ENCODE measurements at regions of chr5 and their contacts with region 1.

Region 1: GRCh38 chr5:102681407-102681983 is 73.6 kb upstream of the PAM start:
- DNase-seq: peak; percentile 3
- ATAC-seq: peak; percentile 97
- H3K4me3 ChIP-seq: no peak overlapping the region
- H3K27ac ChIP-seq: no peak overlapping the region
- H3K4me1 ChIP-seq: no peaks in the 10 kb centered on the region
- H3K27me3 ChIP-seq: no peaks in the 10 kb centered on the region
- CTCF ChIP-seq: peak; percentile 83 to 94 (median 86); a peak in 5 of 6 replicates
- EP300 ChIP-seq: no peak
- POLR2A ChIP-seq: no peak
- RAD21 ChIP-seq: peak; percentile 92

Region 2: GRCh38 chr5:102583276-102584124 is 98.0 kb before region 1 on chr5:
- CTCF ChIA-PET with region 1: interaction called, 9 read pairs
- POLR2A ChIA-PET with region 1: no interaction called
- RAD21 ChIA-PET with region 1: interaction called, 6 read pairs
- SMC1A ChIA-PET with region 1: interaction called, 16 read pairs
- in situ Hi-C with region 1: no loop called
- intact Hi-C with region 1: no loop called
- DNase-seq: no peak
- ATAC-seq: peak; percentile 34; the same call in 1 of the 3 replicates
- H3K4me3 ChIP-seq: no peak overlapping the region
- H3K27ac ChIP-seq: no peak overlapping the region
- H3K4me1 ChIP-seq: no peaks in the 10 kb centered on the region
- H3K27me3 ChIP-seq: no peaks in the 10 kb centered on the region
- CTCF ChIP-seq: peak in 2 of 3 experiments; percentile 23 to 32; a peak in 3 of 6 replicates
- EP300 ChIP-seq: no peak
- POLR2A ChIP-seq: no peak
- RAD21 ChIP-seq: 0 out of 2 replicates have a peak, but pooled peaks have one; percentile 6

Region 3: GRCh38 chr5:102778478-102778877 is 97.0 kb after region 1 on chr5:
- CTCF ChIA-PET with region 1: interaction called, 10 read pairs
- POLR2A ChIA-PET with region 1: interaction called, 3 read pairs
- RAD21 ChIA-PET with region 1: interaction called, 7 read pairs
- SMC1A ChIA-PET with region 1: interaction called, 14 read pairs
- in situ Hi-C with region 1: no loop called
- intact Hi-C with region 1: no loop called
- DNase-seq: no peak
- ATAC-seq: peak; percentile 67
- H3K4me3 ChIP-seq: no peak overlapping the region
- H3K27ac ChIP-seq: no peak overlapping the region
- H3K4me1 ChIP-seq: 0 out of 2 replicates have a peak, but pooled peaks cover 5% of the 10 kb centered on the region
- H3K27me3 ChIP-seq: no peaks in the 10 kb centered on the region
- CTCF ChIP-seq: no peak
- EP300 ChIP-seq: no peak
- POLR2A ChIP-seq: no peak
- RAD21 ChIP-seq: no peak

Region 4: DNA sequence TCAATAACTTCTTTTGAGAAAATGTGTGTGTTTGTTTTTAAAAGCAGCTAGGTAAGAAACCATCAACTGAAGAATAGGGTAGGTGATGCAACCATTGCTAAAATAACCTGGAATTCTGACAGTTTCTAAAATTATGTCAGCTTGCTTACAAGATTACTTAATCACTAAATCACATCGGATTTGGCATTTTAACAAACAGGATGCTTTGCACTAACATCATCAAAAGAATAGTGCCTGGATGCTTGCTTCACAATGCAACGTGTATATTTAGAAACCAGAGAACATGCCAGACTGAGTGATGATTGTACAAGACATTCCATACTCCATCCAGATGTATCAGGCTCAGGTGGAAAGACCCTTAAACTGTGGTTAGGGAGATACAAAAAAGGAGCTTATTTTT is 117.5 kb after region 1 on chr5:
- CTCF ChIA-PET with region 1: interaction called, 10 read pairs
- POLR2A ChIA-PET with region 1: no interaction called
- RAD21 ChIA-PET with region 1: interaction called, 3 read pairs
- SMC1A ChIA-PET with region 1: no interaction called
- in situ Hi-C with region 1: no loop called
- intact Hi-C with region 1: loop called (anchors 5 kb)
- DNase-seq: no peak
- ATAC-seq: no peak
- H3K4me3 ChIP-seq: no peak overlapping the region
- H3K27ac ChIP-seq: no peak overlapping the region
- H3K4me1 ChIP-seq: no peaks in the 10 kb centered on the region
- H3K27me3 ChIP-seq: no peaks in the 10 kb centered on the region
- CTCF ChIP-seq: no peak
- EP300 ChIP-seq: no peak
- POLR2A ChIP-seq: no peak
- RAD21 ChIP-seq: no peak

Region 5: GRCh38 chr5:103031607-103032006 is 350.1 kb after region 1 on chr5:
- CTCF ChIA-PET with region 1: interaction called, 8 read pairs
- POLR2A ChIA-PET with region 1: no interaction called
- RAD21 ChIA-PET with region 1: interaction called, 3 read pairs
- SMC1A ChIA-PET with region 1: interaction called, 8 read pairs
- in situ Hi-C with region 1: loop called (anchors 10 kb)
- intact Hi-C with region 1: no loop called
- DNase-seq: no peak
- ATAC-seq: peak; percentile 40
- H3K4me3 ChIP-seq: no peak overlapping the region
- H3K27ac ChIP-seq: no peak overlapping the region
- H3K4me1 ChIP-seq: no peaks in the 10 kb centered on the region
- H3K27me3 ChIP-seq: no peaks in the 10 kb centered on the region
- CTCF ChIP-seq: peak in 2 of 3 experiments; percentile 12 to 24; a peak in 1 of 6 replicates
- EP300 ChIP-seq: no peak
- POLR2A ChIP-seq: no peak
- RAD21 ChIP-seq: no peak

Region 6: DNA sequence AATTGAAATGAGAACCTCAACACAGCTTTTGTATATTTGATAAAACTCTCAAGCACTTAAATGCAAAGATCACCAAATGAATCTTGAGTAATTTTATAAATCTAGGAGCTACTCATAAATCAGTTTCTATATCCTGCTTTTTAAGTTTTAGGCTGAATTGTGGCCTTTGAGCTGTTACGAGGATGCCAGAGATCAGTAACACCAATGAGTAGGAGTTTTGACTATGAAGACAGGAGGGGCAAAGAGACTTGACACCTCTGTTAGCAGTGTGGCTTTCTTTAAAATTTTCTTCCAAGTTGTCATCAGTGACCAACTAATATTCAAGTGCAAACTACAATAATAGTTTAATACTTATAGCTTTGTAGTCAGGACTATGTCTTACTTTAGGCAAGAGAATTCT is 451.2 kb after region 1 on chr5:
- CTCF ChIA-PET with region 1: interaction called, 54 read pairs
- POLR2A ChIA-PET with region 1: no interaction called
- RAD21 ChIA-PET with region 1: interaction called, 4 read pairs
- SMC1A ChIA-PET with region 1: interaction called, 8 read pairs
- in situ Hi-C with region 1: loop called (anchors 5 kb)
- intact Hi-C with region 1: no loop called
- DNase-seq: no peak
- ATAC-seq: peak; percentile 42; the same call in 2 of the 3 replicates
- H3K4me3 ChIP-seq: no peak overlapping the region
- H3K27ac ChIP-seq: no peak overlapping the region
- H3K4me1 ChIP-seq: no peaks in the 10 kb centered on the region
- H3K27me3 ChIP-seq: no peaks in the 10 kb centered on the region
- CTCF ChIP-seq: no peak
- EP300 ChIP-seq: no peak
- POLR2A ChIP-seq: no peak
- RAD21 ChIP-seq: no peak

Region 7: DNA sequence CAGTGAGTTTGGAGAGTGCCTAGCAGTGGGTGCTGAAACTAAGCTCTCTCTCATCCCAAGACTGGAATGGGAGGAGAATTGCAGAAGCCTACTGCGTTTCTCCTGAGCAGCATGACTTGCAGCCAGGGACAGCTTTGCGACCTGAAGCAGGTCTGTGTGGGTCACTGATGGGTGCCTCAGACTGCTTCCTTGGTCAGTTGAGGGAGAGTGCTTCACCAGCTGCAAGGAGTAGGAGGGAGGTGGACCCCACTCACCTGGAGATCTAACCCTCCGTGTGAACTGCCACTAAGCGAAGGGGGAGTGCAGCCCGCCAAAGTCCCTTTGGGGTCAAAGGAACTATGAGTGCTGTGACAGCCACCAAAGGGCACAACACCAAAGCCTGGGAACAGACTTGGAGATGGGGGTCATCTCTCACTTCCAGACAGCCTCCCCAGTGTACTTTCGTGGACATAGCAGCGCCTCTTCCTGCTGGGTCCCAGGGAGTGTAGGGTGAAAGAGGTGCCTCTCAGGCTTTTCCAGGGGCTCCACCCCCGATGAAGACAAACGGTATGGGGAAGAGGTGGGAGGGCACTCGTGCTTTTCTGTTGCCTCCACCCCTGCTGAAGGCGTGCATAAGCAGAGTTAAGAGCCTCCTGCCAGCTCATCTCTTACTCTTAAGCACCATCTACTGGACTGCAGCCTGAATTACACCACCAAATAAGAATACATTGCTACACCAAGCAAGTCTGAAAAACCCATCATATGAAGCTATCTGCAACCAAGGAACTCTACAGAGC is 542.8 kb after region 1 on chr5:
- CTCF ChIA-PET with region 1: interaction called, 18 read pairs
- POLR2A ChIA-PET with region 1: no interaction called
- RAD21 ChIA-PET with region 1: interaction called, 14 read pairs
- SMC1A ChIA-PET with region 1: no interaction called
- in situ Hi-C with region 1: no loop called
- intact Hi-C with region 1: loop called (anchors 2 kb)
- DNase-seq: peak; percentile 16
- ATAC-seq: peak; percentile 96
- H3K4me3 ChIP-seq: no peak overlapping the region
- H3K27ac ChIP-seq: no peak overlapping the region
- H3K4me1 ChIP-seq: no peaks in the 10 kb centered on the region
- H3K27me3 ChIP-seq: no peaks in the 10 kb centered on the region
- CTCF ChIP-seq: peak; percentile 70 to 85 (median 82)
- EP300 ChIP-seq: no peak
- POLR2A ChIP-seq: no peak
- RAD21 ChIP-seq: peak; percentile 84